T-cell (primary cell): ENCODE measurements at regions of chr3 and their contacts with region 1.

Region 1: DNA sequence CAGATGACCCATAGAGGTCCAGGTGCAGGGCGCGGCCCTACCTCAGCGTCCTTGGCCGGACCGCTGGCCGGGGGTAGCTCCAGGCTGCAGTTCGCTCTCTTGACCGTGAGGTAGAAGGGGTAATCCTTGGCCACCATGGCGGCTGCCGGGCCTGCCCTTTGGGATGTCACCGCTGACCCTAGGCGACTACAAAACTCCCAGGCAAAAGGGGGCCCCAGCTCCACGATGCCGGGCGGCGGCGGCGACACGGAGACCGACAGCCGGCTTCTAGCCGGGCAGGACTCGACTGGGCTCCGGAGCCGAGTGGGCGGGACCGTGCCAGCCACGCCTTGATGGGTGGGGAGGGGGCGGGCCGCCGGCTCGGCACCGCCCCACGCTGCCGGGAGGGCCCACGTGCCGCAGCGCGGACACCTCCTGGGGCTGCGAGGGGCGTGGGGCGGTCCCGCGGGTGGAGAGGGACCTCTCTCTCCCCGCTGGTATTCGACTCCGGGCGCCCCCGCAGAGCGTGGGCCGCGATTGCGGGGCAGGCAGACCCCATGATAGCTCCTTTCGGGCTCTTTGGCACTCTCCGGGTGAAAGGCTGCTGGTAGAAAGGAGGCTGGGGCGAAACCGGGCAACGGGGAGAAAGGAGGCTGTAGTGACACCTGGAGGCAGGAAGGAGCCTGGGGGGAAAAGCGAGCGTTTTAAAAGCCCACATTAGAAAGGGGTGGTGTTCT is at the start of gene ARHGEF3:
- DNase-seq: peak; percentile 70 to 95 (median 83)
- ATAC-seq: peak; percentile 84 to 91 (median 86)
- H3K4me3 ChIP-seq: peak within 1 kb of the TSS; percentile 80 to 88
- H3K4me3 Mint-ChIP-seq: peak within 1 kb of the TSS; percentile 90 to 97 (median 93)
- H3K27ac ChIP-seq: peak within 1 kb of the TSS; percentile 60
- H3K27ac Mint-ChIP-seq: peak within 1 kb of the TSS; percentile 85 to 92
- H3K4me1 ChIP-seq: peaks cover 16 to 33% of the 10 kb centered on the region in 2 experiments
- H3K4me1 Mint-ChIP-seq: peaks cover 39 to 49% (median 40%) of the 10 kb centered on the region in 3 donors
- H3K27me3 ChIP-seq: no peaks in the 10 kb centered on the region
- H3K27me3 Mint-ChIP-seq: no peaks in the 10 kb centered on the region
- total RNA-seq, gene ARHGEF3: 93.4 to 132 (median 124) TPM

Region 2: GRCh38 chr3:56693750-56694149 is 108.1 kb before region 1 on chr3:
- CTCF ChIA-PET with region 1: interaction called, 3 to 18 read pairs
- POLR2A ChIA-PET with region 1: interaction called, 4 read pairs
- DNase-seq: peak in 1 of 35 experiments; percentile 18
- ATAC-seq: no peak
- H3K4me3 ChIP-seq: no peak overlapping the region
- H3K4me3 Mint-ChIP-seq: peak overlapping the region in 2 of 3 donors; percentile 6 to 53
- H3K27ac ChIP-seq: peak overlapping the region; percentile 68
- H3K27ac Mint-ChIP-seq: peak overlapping the region; percentile 16 to 79
- H3K4me1 ChIP-seq: peaks cover 37% of the 10 kb centered on the region in 2 experiments
- H3K4me1 Mint-ChIP-seq: peaks cover 46 to 47% (median 47%) of the 10 kb centered on the region in 3 donors
- H3K27me3 ChIP-seq: no peaks in the 10 kb centered on the region
- H3K27me3 Mint-ChIP-seq: no peaks in the 10 kb centered on the region

Region 3: GRCh38 chr3:56737006-56737405 is 64.8 kb before region 1 on chr3:
- CTCF ChIA-PET with region 1: interaction called, 5 to 34 read pairs
- POLR2A ChIA-PET with region 1: interaction called, 3 read pairs
- DNase-seq: no peak
- ATAC-seq: no peak
- H3K4me3 ChIP-seq: no peak overlapping the region
- H3K4me3 Mint-ChIP-seq: no peak overlapping the region
- H3K27ac ChIP-seq: no peak overlapping the region
- H3K27ac Mint-ChIP-seq: peak overlapping the region; percentile 49 to 64
- H3K4me1 ChIP-seq: peaks cover 14 to 20% of the 10 kb centered on the region in 2 experiments
- H3K4me1 Mint-ChIP-seq: peaks cover 33 to 54% (median 53%) of the 10 kb centered on the region in 3 donors
- H3K27me3 ChIP-seq: no peaks in the 10 kb centered on the region
- H3K27me3 Mint-ChIP-seq: no peaks in the 10 kb centered on the region

Region 4: GRCh38 chr3:56783644-56784447 is 18.0 kb before region 1 on chr3:
- CTCF ChIA-PET with region 1: interaction called, 8 to 131 read pairs
- POLR2A ChIA-PET with region 1: interaction called, 21 to 23 read pairs
- DNase-seq: peak in 34 of 35 experiments; percentile 46 to 89 (median 76)
- ATAC-seq: peak; percentile 88 to 92 (median 92)
- H3K4me3 ChIP-seq: peak overlapping the region in 1 of 2 donors; percentile 19
- H3K4me3 Mint-ChIP-seq: peak overlapping the region; percentile 69 to 72 (median 70)
- H3K27ac ChIP-seq: peak overlapping the region; percentile 86
- H3K27ac Mint-ChIP-seq: peak overlapping the region; percentile 97 to 99
- H3K4me1 ChIP-seq: peaks cover 75 to 91% of the 10 kb centered on the region in 2 experiments
- H3K4me1 Mint-ChIP-seq: peaks cover 98 to 99% (median 98%) of the 10 kb centered on the region in 3 donors
- H3K27me3 ChIP-seq: no peaks in the 10 kb centered on the region
- H3K27me3 Mint-ChIP-seq: no peaks in the 10 kb centered on the region

Region 5: DNA sequence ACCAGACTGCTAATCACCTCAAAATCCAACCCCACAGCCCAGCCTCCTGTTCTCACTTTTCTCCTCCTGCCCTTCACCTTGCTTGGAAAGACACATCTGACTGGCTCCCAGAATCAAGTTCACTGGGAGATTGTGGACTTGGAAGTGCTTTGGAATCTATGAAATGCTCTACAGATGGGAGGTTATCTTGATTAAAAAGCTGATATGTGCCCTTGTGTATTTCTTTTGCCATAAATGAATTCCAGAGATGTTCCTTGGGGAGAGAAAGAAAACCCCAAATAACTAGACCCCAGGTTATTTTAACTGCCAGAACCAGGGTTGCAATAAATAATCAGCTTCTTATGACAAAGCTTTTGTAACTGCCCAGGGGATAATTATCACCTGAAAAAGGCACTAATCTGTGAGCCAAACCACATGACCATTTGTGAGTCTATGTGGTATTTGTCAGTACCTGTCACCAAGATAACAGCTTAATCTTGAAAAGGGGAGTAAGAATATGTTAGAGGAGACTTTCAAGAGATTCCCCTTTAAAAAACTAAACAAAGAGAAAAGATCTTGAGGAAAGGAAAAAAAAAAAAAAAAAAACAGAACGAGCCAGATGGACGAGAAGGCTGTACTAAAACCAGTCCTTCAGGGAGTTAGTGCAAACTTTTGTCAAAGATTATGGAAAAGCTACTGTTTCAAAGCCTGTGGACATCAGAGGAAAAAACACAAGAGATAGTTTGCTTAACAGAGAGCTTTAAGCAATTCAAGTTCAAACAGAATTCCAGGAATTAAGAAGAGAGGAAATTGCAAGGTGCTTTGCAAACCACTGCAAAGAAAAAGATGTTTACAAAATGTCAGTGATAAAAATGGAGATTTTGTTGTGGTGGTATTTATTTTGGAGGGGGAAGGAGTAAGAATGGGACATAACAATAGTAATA is 21.9 kb after region 1 on chr3:
- CTCF ChIA-PET with region 1: interaction called, 4 to 10 read pairs
- POLR2A ChIA-PET with region 1: interaction called, 5 to 7 read pairs
- DNase-seq: no peak
- ATAC-seq: no peak
- H3K4me3 ChIP-seq: no peak overlapping the region
- H3K4me3 Mint-ChIP-seq: peak overlapping the region in 2 of 3 donors; percentile 7 to 13
- H3K27ac ChIP-seq: no peak overlapping the region
- H3K27ac Mint-ChIP-seq: peak overlapping the region; percentile 71 to 77
- H3K4me1 ChIP-seq: peaks cover 4 to 16% of the 10 kb centered on the region in 2 experiments
- H3K4me1 Mint-ChIP-seq: peaks cover 61 to 69% (median 61%) of the 10 kb centered on the region in 3 donors
- H3K27me3 ChIP-seq: no peaks in the 10 kb centered on the region
- H3K27me3 Mint-ChIP-seq: no peaks in the 10 kb centered on the region